ENCODE measurements at regions of chr1 and their contacts with region 1.

Region 1: GRCh38 chr1:52683367-52683940 is 14.7 kb downstream of the COA7 start:
- DNase-seq: no peak
- H3K4me3 Mint-ChIP-seq: no peak overlapping the region
- H3K27ac Mint-ChIP-seq: no peak overlapping the region
- H3K4me1 Mint-ChIP-seq: peaks cover 26% of the 10 kb centered on the region
- H3K27me3 Mint-ChIP-seq: no peaks in the 10 kb centered on the region

Region 2: GRCh38 chr1:52127181-52128180 is 556.0 kb before region 1 on chr1:
- intact Hi-C with region 1: loop called (anchors 5 kb)
- DNase-seq: no peak
- H3K4me3 Mint-ChIP-seq: no peak overlapping the region
- H3K27ac Mint-ChIP-seq: no peak overlapping the region
- H3K4me1 Mint-ChIP-seq: no peaks in the 10 kb centered on the region
- H3K27me3 Mint-ChIP-seq: peaks cover 34% of the 10 kb centered on the region

Region 3: DNA sequence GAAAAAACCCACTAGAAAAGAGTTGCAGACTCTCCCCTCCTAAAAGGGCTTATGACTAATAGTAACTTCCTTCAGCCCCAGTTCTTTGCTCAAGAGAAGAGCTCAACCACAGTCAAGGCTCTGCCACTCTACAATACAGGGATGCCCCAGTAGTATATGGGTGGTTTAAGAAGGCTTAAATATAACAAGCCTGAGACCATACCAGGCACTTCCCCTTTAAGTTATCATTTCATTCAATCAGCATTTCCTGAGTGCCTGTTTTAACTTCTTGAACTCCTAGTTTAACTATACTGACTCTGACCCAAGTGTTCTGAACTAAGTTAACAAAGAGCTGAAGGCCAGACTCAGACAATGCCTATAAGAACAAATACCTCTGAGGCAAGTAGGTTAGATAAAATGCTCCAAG is 259.2 kb before region 1 on chr1:
- intact Hi-C with region 1: loop called (anchors 1 kb)
- DNase-seq: peak; percentile 21
- H3K4me3 Mint-ChIP-seq: peak overlapping the region; percentile 19
- H3K27ac Mint-ChIP-seq: peak overlapping the region; percentile 82
- H3K4me1 Mint-ChIP-seq: peaks cover 49% of the 10 kb centered on the region
- H3K27me3 Mint-ChIP-seq: no peaks in the 10 kb centered on the region

Region 4: GRCh38 chr1:52511851-52512615 is 171.4 kb before region 1 on chr1:
- intact Hi-C with region 1: loop called (anchors 10 kb)
- DNase-seq: no peak
- H3K4me3 Mint-ChIP-seq: no peak overlapping the region
- H3K27ac Mint-ChIP-seq: no peak overlapping the region
- H3K4me1 Mint-ChIP-seq: peaks cover 5% of the 10 kb centered on the region
- H3K27me3 Mint-ChIP-seq: no peaks in the 10 kb centered on the region

Region 5: GRCh38 chr1:52601991-52602855 is 81.2 kb before region 1 on chr1 and contains the start of gene GPX7:
- intact Hi-C with region 1: loop called (anchors 2 kb)
- DNase-seq: peak; percentile 54
- H3K4me3 Mint-ChIP-seq: peak within 1 kb of the TSS; percentile 87
- H3K27ac Mint-ChIP-seq: peak within 1 kb of the TSS; percentile 86
- H3K4me1 Mint-ChIP-seq: peaks cover 49% of the 10 kb centered on the region
- H3K27me3 Mint-ChIP-seq: no peaks in the 10 kb centered on the region
- total RNA-seq, gene GPX7: 32.7 and 32.8 TPM in 2 replicates

Region 6: GRCh38 chr1:52636721-52637695 is 46.4 kb before region 1 on chr1:
- intact Hi-C with region 1: loop called (anchors 1 kb)
- DNase-seq: peak; percentile 78
- H3K4me3 Mint-ChIP-seq: peak overlapping the region; percentile 77
- H3K27ac Mint-ChIP-seq: peak overlapping the region; percentile 99
- H3K4me1 Mint-ChIP-seq: peaks cover 68% of the 10 kb centered on the region
- H3K27me3 Mint-ChIP-seq: peaks cover 2% of the 10 kb centered on the region

Region 7: GRCh38 chr1:52659356-52659755 is 24.1 kb before region 1 on chr1:
- intact Hi-C with region 1: loop called (anchors 1 kb)
- DNase-seq: peak; percentile 20
- H3K4me3 Mint-ChIP-seq: peak overlapping the region; percentile 29
- H3K27ac Mint-ChIP-seq: peak overlapping the region; percentile 90
- H3K4me1 Mint-ChIP-seq: peaks cover 31% of the 10 kb centered on the region
- H3K27me3 Mint-ChIP-seq: no peaks in the 10 kb centered on the region

Region 8: DNA sequence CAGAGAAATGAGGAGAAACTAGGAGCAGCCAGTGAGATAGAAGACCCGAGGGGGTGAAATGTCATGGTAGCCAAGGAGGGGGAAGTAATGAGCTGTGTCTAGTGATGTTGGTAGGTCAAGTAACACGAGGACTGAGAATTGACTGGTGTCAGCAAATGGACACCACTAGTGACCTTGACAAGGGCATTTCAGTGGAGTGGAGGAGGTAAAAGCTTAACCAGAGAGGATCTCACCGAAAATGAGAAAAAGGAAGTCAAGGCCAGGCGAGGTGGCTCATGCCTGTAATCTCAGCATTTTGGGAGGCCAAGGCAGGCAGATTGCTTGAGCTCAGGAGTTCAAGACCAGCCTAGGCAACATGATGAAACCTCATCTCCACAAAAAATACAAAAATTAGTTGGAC is 39.8 kb after region 1 on chr1:
- intact Hi-C with region 1: no loop called
- DNase-seq: no peak
- H3K4me3 Mint-ChIP-seq: no peak overlapping the region
- H3K27ac Mint-ChIP-seq: no peak overlapping the region
- H3K4me1 Mint-ChIP-seq: peaks cover 32% of the 10 kb centered on the region
- H3K27me3 Mint-ChIP-seq: no peaks in the 10 kb centered on the region

Region 9: GRCh38 chr1:53315456-53316423 is 632.3 kb after region 1 on chr1:
- intact Hi-C with region 1: no loop called
- DNase-seq: no peak
- H3K4me3 Mint-ChIP-seq: no peak overlapping the region
- H3K27ac Mint-ChIP-seq: peak overlapping the region; percentile 55
- H3K4me1 Mint-ChIP-seq: peaks cover 34% of the 10 kb centered on the region
- H3K27me3 Mint-ChIP-seq: no peaks in the 10 kb centered on the region